ENCODE measurements at regions of chr6 and their contacts with region 1.

Region 1: GRCh38 chr6:63764318-63764916 is 128.8 kb downstream of the PHF3 start:
- DNase-seq: peak in 2 of 5 donors; percentile 57 to 66
- H3K4me3 ChIP-seq: no peak overlapping the region
- H3K27ac ChIP-seq: no peak overlapping the region
- H3K4me1 ChIP-seq: no peaks in the 10 kb centered on the region
- H3K27me3 ChIP-seq: no peaks in the 10 kb centered on the region
- CTCF ChIP-seq: peak; percentile 46

Region 2: GRCh38 chr6:63598049-63599036 is 166.1 kb before region 1 on chr6:
- intact Hi-C with region 1: loop called (anchors 10 kb)
- DNase-seq: peak; percentile 71 to 88 (median 85)
- H3K4me3 ChIP-seq: peak overlapping the region; percentile 81 to 85 (median 83)
- H3K27ac ChIP-seq: no peak overlapping the region
- H3K4me1 ChIP-seq: peaks cover 0 to 3% (median 0%) of the 10 kb centered on the region in 3 donors
- H3K27me3 ChIP-seq: no peaks in the 10 kb centered on the region
- CTCF ChIP-seq: peak; percentile 83